Panc1 (cell line): ENCODE measurements at regions of chr20 and their contacts with region 1.

Region 1: DNA sequence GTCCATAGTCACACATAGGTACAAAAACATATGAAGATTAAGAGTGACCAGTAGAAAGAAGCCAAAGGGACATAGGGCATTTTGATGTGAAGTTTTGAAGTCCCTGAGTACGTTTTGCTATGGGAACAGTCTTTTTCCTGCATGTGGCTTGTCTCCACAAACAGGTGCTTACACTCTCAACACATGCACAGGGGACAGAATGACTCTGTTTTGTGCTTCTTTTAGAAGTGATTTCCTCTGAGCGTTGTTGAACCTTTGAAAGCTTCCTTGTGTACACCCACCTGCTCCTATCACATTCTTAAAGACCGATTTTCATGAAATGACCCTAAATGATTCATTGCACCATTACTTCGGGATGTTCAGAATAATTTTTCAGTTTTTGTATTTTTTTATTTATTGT is 338.8 kb upstream of the CDH4 start:
- DNase-seq: no peak
- ATAC-seq: no peak
- H3K4me3 ChIP-seq: no peak overlapping the region
- H3K27ac ChIP-seq: no peak overlapping the region
- H3K4me1 ChIP-seq: no peaks in the 10 kb centered on the region
- H3K27me3 ChIP-seq: no peaks in the 10 kb centered on the region
- CTCF ChIP-seq: no peak

Region 2: GRCh38 chr20:60851826-60852704 is 61.2 kb before region 1 on chr20:
- CTCF ChIA-PET with region 1: no interaction called
- POLR2A ChIA-PET with region 1: interaction called, 16 read pairs
- in situ Hi-C with region 1: no loop called
- intact Hi-C with region 1: no loop called
- DNase-seq: no peak
- ATAC-seq: no peak
- H3K4me3 ChIP-seq: no peak overlapping the region
- H3K27ac ChIP-seq: no peak overlapping the region
- H3K4me1 ChIP-seq: no peaks in the 10 kb centered on the region
- H3K27me3 ChIP-seq: peaks cover 3% of the 10 kb centered on the region; the same call in 1 of the 2 replicates
- CTCF ChIP-seq: peak; percentile 65

Region 3: DNA sequence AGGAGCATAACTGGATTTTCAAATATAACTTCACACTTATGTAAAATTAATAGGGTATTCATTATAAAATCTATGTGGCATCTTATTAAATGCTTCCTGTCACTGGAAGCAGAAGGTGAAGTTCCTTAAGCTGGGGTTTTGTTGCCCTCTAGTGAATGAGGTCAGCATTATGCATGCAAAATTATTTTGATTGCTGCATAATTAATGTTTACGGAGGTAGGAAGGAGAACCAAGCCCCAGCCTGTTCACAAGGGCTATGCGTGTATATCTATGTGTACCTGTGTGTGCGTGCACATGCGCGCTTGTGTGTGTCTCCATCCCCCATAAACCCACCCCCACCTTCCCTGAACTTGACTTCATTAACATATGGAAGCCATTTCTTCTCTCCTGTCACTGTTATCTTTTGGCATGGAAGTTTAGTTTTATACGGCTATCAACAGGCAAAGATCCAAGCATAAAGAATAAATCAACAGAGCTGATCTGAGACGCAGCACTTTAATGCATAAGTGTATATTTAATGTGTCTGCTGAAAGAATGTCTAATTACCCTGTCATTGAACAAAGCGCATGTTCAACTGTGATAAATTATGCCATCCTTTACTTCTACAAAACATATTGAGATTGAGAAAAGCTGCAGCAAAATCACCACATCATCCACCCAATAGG is 248.6 kb after region 1 on chr20:
- CTCF ChIA-PET with region 1: no interaction called
- POLR2A ChIA-PET with region 1: no interaction called
- in situ Hi-C with region 1: no loop called
- intact Hi-C with region 1: no loop called
- DNase-seq: no peak
- ATAC-seq: no peak
- H3K4me3 ChIP-seq: no peak overlapping the region
- H3K27ac ChIP-seq: no peak overlapping the region
- H3K4me1 ChIP-seq: no peaks in the 10 kb centered on the region
- H3K27me3 ChIP-seq: no peaks in the 10 kb centered on the region
- CTCF ChIP-seq: no peak; the same call in 1 of the 2 replicates